ENCODE measurements at regions of chr9 and their contacts with region 1.

Region 1: DNA sequence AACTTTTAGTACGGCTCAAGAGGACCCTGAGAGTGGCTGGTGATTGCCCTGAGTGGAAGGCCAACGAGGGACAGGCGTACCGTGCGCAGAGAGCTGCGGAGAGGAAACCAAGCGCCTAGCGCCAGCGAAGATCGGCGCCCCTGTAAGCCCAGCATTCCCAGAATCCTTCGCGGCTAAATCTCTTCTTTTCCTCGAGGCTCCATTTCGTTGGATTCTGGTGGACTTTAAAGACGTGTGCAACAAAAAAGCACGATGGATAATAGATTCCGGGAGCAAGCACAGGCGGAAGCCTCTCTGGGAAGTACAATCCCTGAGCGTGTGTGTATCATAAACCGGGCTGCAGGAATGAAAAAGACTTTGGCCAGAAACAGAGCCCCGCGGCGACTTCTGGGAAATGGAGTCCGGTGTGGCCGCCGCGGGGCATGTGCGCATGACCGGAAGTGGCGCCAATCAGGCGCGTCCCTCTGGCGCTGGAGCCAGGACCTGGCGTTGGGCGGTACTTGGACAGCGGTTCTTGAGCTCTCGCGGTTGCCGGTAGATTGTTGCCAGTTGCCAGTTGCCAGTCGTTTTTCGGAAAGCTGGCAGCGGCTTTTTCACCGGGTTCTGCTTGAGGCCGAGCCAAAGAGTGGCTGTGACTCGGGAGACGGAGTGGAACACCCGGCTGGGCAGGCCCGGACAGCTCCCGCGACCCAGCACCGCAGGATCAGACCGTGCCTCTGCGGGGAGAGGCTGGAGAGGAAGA is at the start of gene ZNF79:
- DNase-seq: peak; percentile 94 to 96 (median 95)
- ATAC-seq: peak; percentile 97 to 99 (median 98)
- H3K4me3 ChIP-seq: peak within 1 kb of the TSS; percentile 57 to 97 (median 78)
- H3K27ac ChIP-seq: peak within 1 kb of the TSS; percentile 69 to 95 (median 92)
- H3K4me1 ChIP-seq: peaks cover 10 to 46% (median 27%) of the 10 kb centered on the region in 12 donors
- H3K27me3 ChIP-seq: no peaks in the 10 kb centered on the region
- CTCF ChIP-seq: no peak
- POLR2A ChIP-seq: peak in 1 of 2 donors; percentile 67
- total RNA-seq, gene ZNF79: 4.6 to 7.4 (median 5.8) TPM

Region 2: DNA sequence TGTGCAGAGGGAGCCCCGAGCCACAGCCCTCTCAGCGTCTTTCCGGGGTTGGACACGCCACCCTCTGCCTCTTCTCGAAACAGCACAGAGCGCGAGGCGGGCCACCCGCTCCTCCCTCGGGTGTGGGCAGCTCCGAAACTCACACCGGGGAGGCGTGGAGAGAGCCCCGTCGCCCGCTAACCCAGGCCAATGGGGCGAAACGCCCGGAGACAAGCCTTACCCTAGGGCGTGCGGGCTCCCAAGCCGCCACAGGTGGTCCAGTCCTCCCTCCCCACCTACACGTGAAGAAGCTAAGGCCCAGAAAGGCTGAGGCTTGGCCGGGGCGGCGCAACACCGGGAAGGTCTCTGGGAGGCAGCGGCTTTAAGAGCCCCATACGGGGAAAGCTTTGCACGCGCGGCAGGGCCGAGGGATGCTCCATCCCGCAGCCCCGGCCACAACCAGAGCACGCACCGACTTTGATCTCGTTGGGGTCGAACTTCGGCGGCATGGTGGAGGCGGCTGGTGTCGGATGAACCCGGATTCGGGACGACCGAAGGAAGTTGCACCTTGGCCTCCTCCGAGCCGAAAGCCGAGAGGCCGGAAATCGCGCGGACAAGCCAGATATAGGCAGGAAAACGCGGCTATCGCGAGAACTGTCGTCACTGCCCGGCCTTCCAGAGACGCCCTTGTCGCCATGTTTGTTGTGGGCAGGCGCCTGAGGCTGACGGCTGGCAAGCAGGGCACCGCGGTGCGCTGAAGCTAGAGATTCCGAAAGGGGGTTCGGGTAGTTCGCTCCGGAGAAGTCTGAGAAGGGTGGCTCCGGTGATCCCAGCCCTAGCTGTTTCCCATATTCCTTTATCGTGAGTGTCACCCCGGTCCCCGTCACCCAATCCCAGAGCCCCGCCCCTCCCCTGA is 27.0 kb after region 1 on chr9 and contains the starts of genes LRSAM1 and RPL12:
- intact Hi-C with region 1: loop called in 3 of 10 experiments (anchors 1 kb)
- DNase-seq: peak; percentile 96 to 99 (median 97)
- ATAC-seq: peak; percentile 75 to 87 (median 78)
- H3K4me3 ChIP-seq: peak within 1 kb of the TSS; percentile 64 to 93 (median 89)
- H3K27ac ChIP-seq: peak within 1 kb of the TSS; percentile 90 to 98 (median 95)
- H3K4me1 ChIP-seq: peaks cover 7 to 58% (median 36%) of the 10 kb centered on the region in 12 donors
- H3K27me3 ChIP-seq: no peaks in the 10 kb centered on the region
- CTCF ChIP-seq: peak in 3 of 12 donors; percentile 11 to 27 (median 24)
- POLR2A ChIP-seq: peak; percentile 89 to 99
- total RNA-seq, gene LRSAM1: 21.9 to 42.2 (median 31.6) TPM
- total RNA-seq, gene RPL12: 408 to 937 (median 547) TPM